Cardiac septum (tissue), 1 donor: ENCODE measurements at regions of chr6 and their contacts with region 1.

Region 1: GRCh38 chr6:79570129-79571029 is 33.1 kb upstream of the LCA5 start:
- DNase-seq: no peak

Region 2: DNA sequence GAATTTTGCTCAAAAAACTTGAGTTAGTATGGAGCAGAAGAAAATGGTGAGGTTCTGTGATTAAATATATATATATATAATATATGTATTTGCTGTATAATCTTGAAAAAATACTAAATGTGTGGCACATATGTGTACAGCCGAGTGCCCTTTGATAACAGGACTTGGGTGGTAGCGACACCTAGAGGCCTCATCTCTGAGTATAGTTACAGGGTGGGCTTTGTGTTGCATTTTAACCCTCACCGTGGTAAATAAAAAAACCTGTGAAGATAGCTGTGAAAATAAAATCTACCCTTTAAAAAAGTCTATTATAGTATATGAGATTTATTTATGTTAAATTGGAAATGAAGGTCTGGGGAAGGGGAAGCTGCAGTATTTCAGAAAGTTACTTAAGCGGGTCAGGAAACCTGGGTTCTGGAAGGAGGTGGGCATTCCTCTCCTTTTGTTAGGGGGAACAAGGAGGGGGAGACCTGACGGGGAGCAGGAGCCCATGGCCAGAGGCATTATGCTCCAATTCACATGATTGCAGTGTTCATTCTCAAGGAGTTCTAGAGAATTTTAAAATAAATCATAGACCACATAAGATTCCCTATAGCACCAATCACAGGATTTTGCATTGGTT is 143.4 kb after region 1 on chr6:
- intact Hi-C with region 1: loop called (anchors 5 kb)
- DNase-seq: no peak

Region 3: DNA sequence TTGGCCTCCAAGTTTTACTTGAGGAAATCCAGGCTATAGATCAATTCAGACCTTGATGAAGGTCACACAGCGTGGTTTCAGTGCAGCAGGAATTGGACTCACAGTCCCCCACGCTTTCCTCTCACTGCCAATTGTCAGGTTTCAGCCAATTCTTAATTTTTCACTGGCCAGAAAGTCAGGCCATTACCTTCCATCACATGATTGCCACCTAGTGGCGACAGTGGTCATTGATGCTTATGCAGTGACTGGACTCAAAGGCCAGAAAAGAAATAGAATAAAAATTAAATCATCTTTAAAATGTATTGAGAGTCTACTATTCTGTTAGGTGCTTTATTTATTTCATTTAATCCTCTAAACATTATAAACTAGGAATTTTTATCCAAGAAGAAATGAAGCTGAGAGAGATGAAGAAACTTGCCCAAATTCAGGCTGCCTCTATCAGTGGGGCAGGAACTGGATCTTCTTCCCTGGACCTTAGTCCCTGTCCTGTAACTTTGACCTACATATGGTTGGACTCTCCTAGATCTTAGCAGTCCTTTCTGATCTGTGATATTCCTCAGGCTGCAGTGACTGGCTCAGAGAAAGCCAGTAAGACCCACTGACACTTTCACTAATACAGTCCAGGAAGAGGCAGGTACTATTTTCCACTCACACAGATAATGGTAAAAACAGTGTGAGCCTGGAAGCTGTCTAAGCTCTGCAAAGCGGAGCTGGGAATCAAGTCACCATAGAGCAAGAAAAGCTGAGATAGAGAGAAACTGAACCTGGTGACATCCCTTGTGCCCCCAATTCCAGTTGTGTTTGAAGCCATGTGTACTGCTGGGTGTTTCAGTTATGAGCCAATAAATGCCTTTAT is 243.7 kb after region 1 on chr6:
- intact Hi-C with region 1: loop called (anchors 5 kb)
- DNase-seq: no peak